ENCODE measurements at regions of chr2 and their contacts with region 1.

Region 1: GRCh38 chr2:99337113-99338028 is at the start of gene EIF5B:
- DNase-seq: peak; percentile 86 to 98
- H3K4me3 ChIP-seq: peak within 1 kb of the TSS; percentile 72 to 82
- H3K27ac ChIP-seq: peak within 1 kb of the TSS; percentile 86 to 96
- H3K4me1 ChIP-seq: peaks cover 6 to 11% of the 10 kb centered on the region in 2 donors
- H3K27me3 ChIP-seq: no peaks in the 10 kb centered on the region
- CTCF ChIP-seq: peak; percentile 17 to 83 (median 79)
- total RNA-seq, gene EIF5B: 38.2 TPM

Region 2: GRCh38 chr2:98160554-98160953 is 1176.8 kb before region 1 on chr2:
- intact Hi-C with region 1: loop called (anchors 10 kb)
- DNase-seq: peak in 1 of 2 donors; percentile 69
- H3K4me3 ChIP-seq: no peak overlapping the region
- H3K27ac ChIP-seq: peak overlapping the region; percentile 79 to 83
- H3K4me1 ChIP-seq: peaks cover 31 to 44% of the 10 kb centered on the region in 2 donors
- H3K27me3 ChIP-seq: no peaks in the 10 kb centered on the region
- CTCF ChIP-seq: no peak

Region 3: GRCh38 chr2:98608116-98608999 is 729.0 kb before region 1 on chr2 and contains the starts of genes COA5 and UNC50:
- intact Hi-C with region 1: loop called (anchors 5 kb)
- DNase-seq: peak; percentile 58 to 93
- H3K4me3 ChIP-seq: peak within 1 kb of the TSS; percentile 77 to 98
- H3K27ac ChIP-seq: peak within 1 kb of the TSS; percentile 96
- H3K4me1 ChIP-seq: peaks cover 25 to 34% of the 10 kb centered on the region in 2 donors
- H3K27me3 ChIP-seq: no peaks in the 10 kb centered on the region
- CTCF ChIP-seq: peak in 1 of 3 experiments; percentile 10
- total RNA-seq, gene COA5: 86.3 TPM
- total RNA-seq, gene UNC50: 34.4 TPM

Region 4: GRCh38 chr2:99180755-99181623 is 156.4 kb before region 1 on chr2 and contains the starts of genes MITD1 and MRPL30:
- intact Hi-C with region 1: loop called (anchors 1 kb)
- DNase-seq: peak; percentile 72 to 95
- H3K4me3 ChIP-seq: peak within 1 kb of the TSS; percentile 65 to 89
- H3K27ac ChIP-seq: peak within 1 kb of the TSS; percentile 66 to 70
- H3K4me1 ChIP-seq: peaks cover 0 to 20% of the 10 kb centered on the region in 2 donors
- H3K27me3 ChIP-seq: no peaks in the 10 kb centered on the region
- CTCF ChIP-seq: no peak
- total RNA-seq, gene MITD1: 13.3 TPM
- total RNA-seq, gene MRPL30: 32.6 TPM

Region 5: GRCh38 chr2:99285526-99285925 is 51.8 kb before region 1 on chr2:
- intact Hi-C with region 1: no loop called
- DNase-seq: no peak
- H3K4me3 ChIP-seq: no peak overlapping the region
- H3K27ac ChIP-seq: no peak overlapping the region
- H3K4me1 ChIP-seq: no peaks in the 10 kb centered on the region
- H3K27me3 ChIP-seq: no peaks in the 10 kb centered on the region
- CTCF ChIP-seq: no peak

Region 6: DNA sequence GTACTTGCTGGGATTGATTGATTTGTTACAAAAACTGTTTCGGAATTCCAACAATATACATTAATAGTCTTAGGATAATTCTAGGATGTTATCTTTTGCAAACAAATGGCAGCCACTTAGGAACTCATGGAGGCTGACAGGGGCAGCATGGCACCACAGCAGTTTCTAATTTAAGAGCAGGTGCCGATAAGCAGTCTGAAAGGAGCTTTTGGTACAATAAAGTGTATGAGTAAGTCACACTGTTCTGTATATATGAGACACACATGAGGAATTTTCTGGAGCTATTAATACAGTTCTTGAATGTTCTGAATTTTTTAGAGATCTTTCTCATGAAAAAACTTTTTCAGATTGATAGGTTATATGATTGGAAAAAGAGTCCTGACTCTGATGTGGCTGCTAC is 52.0 kb after region 1 on chr2:
- intact Hi-C with region 1: loop called (anchors 5 kb)
- DNase-seq: no peak
- H3K4me3 ChIP-seq: no peak overlapping the region
- H3K27ac ChIP-seq: peak overlapping the region; percentile 41 to 64
- H3K4me1 ChIP-seq: peaks cover 0 to 3% of the 10 kb centered on the region in 2 donors
- H3K27me3 ChIP-seq: no peaks in the 10 kb centered on the region
- CTCF ChIP-seq: no peak

Region 7: DNA sequence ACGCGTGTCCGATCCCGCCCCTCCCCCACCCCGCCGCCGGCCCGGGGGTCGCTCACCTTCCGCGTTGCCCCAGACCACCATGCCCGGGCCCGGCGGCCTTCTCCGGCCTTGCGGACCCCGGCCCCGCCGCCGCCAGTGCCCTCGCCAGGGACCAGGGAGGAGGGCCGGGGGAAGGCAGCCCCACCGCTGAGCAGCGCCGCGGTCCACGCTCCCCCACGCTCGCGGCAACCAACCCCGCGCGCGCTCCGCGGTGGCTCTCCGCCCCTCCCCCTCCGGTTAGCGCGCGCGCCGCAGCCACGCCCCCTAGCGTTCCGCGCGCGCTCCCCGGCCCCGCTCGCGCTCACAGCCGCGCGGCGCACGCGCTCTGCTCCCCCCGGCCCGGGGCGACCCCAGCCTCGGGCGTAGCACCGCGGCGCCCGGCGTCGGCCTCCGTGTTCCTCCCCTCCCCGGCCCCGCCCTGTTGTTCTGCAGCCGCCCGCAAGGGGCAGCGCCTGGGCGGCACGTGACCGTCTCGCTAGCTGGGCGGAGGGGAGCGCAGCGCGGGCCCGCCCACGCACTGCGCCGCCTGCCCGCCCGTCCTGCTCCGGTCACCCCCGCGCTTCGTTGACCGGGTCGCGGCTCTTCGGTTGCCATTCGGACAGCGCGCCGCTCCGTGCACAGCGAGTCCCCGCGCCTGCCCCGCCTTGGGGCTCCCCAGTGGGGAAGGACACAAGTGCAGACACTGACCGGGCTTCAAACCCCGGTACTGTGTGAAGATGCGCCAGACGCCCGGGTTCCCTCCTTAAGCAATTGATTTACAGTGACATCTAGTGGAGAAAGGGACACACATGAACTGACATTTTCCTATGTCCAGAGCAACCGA is 152.6 kb after region 1 on chr2 and contains the start of gene REV1:
- intact Hi-C with region 1: loop called (anchors 1 kb)
- DNase-seq: peak; percentile 70 to 95
- H3K4me3 ChIP-seq: peak within 1 kb of the TSS; percentile 99 to 100
- H3K27ac ChIP-seq: peak within 1 kb of the TSS; percentile 89 to 99
- H3K4me1 ChIP-seq: peaks cover 0 to 14% of the 10 kb centered on the region in 2 donors
- H3K27me3 ChIP-seq: no peaks in the 10 kb centered on the region
- CTCF ChIP-seq: peak; percentile 74 to 91 (median 80)
- total RNA-seq, gene REV1: 26.8 TPM